Caco-2 (cell line): ENCODE measurements at regions of chr12 and their contacts with region 1.

Region 1: DNA sequence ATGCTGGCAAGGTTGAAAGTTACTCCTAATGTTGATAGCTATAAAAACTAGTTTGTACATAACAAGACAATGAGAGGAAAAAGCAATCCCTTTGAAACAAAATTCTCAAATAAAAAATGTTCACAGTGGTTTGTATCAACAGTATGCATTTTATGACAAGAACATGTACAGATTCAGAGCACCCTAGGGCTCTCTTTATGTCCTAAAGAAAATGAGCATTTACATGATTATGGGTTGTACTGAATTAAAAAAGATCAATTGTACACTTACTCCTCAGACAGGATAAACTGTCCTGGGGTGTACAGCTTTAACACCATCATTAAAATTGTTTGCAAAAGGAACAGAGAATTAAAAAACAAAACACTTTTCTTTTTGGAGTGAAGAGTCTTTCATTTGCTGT is 22.2 kb downstream of the PPP1CC start:
- DNase-seq: no peak
- H3K4me3 ChIP-seq: no peak overlapping the region
- H3K4me3 Mint-ChIP-seq: no peak overlapping the region
- H3K27ac Mint-ChIP-seq: no peak overlapping the region
- H3K4me1 ChIP-seq: no peaks in the 10 kb centered on the region
- H3K4me1 Mint-ChIP-seq: no peaks in the 10 kb centered on the region
- H3K27me3 ChIP-seq: no peaks in the 10 kb centered on the region
- H3K27me3 Mint-ChIP-seq: no peaks in the 10 kb centered on the region
- CTCF ChIP-seq: no peak

Region 2: DNA sequence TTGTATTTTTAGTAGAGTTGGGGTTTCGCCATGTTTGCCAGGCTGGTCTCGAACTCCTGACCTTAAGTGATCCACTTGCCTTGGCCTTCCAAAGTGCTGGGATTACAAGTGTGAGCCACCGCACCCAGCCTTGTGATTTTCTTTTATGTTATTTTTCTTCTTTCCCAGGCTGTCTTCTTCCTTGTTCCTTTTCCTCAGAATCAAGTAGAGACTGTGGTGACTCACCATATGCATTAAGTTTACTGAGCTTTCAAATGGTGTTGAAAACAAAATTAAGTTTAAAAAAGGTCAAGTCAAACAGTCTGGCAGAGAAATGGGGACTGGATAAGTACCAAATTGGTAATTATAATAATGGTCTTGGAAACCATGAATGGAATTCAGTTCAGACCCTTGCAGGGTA is 276.1 kb before region 1 on chr12:
- CTCF ChIA-PET with region 1: no interaction called
- POLR2A ChIA-PET with region 1: no interaction called
- intact Hi-C with region 1: no loop called
- DNase-seq: no peak
- H3K4me3 ChIP-seq: no peak overlapping the region
- H3K4me3 Mint-ChIP-seq: no peak overlapping the region
- H3K27ac Mint-ChIP-seq: no peak overlapping the region
- H3K4me1 ChIP-seq: peaks cover 5% of the 10 kb centered on the region
- H3K4me1 Mint-ChIP-seq: no peaks in the 10 kb centered on the region
- H3K27me3 ChIP-seq: no peaks in the 10 kb centered on the region
- H3K27me3 Mint-ChIP-seq: no peaks in the 10 kb centered on the region
- CTCF ChIP-seq: no peak

Region 3: DNA sequence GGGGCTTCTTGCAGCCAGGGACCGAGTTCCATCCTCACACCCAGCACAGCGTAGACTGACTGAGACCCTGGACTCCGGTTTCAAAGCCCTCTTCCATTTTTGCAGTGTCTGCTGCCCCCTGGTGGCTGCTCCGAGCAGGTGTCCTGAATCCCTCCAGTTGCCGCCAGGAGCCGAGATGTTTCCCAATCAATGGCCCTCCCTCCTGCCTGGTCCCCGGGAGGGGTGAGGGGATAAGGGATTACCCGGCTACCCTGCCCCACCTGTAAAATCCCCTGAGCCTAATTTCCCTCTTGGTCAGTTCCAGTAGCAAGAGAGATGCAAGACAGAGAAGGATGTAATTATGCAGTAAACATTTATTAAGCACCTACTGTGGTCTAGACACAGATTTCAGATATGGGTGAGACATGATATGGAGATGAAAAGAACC is 593.3 kb after region 1 on chr12:
- CTCF ChIA-PET with region 1: interaction called, 11 read pairs
- POLR2A ChIA-PET with region 1: no interaction called
- intact Hi-C with region 1: no loop called
- DNase-seq: peak; percentile 66 to 79
- H3K4me3 ChIP-seq: no peak overlapping the region
- H3K4me3 Mint-ChIP-seq: no peak overlapping the region
- H3K27ac Mint-ChIP-seq: no peak overlapping the region
- H3K4me1 ChIP-seq: no peaks in the 10 kb centered on the region
- H3K4me1 Mint-ChIP-seq: no peaks in the 10 kb centered on the region
- H3K27me3 ChIP-seq: no peaks in the 10 kb centered on the region
- H3K27me3 Mint-ChIP-seq: peaks cover 17% of the 10 kb centered on the region
- CTCF ChIP-seq: peak; percentile 88 to 93